GM12878 (cell line): ENCODE measurements at regions of chr2 and their contacts with region 1.

Region 1: GRCh38 chr2:198715302-198715835 is 742.4 kb downstream of the SATB2 start:
- DNase-seq: no peak
- ATAC-seq: peak; percentile 25
- H3K4me3 ChIP-seq: no peak overlapping the region
- H3K27ac ChIP-seq: no peak overlapping the region
- H3K4me1 ChIP-seq: no peaks in the 10 kb centered on the region
- H3K27me3 ChIP-seq: no peaks in the 10 kb centered on the region
- CTCF ChIP-seq: no peak
- EP300 ChIP-seq: no peak
- POLR2A ChIP-seq: no peak
- RAD21 ChIP-seq: no peak

Region 2: DNA sequence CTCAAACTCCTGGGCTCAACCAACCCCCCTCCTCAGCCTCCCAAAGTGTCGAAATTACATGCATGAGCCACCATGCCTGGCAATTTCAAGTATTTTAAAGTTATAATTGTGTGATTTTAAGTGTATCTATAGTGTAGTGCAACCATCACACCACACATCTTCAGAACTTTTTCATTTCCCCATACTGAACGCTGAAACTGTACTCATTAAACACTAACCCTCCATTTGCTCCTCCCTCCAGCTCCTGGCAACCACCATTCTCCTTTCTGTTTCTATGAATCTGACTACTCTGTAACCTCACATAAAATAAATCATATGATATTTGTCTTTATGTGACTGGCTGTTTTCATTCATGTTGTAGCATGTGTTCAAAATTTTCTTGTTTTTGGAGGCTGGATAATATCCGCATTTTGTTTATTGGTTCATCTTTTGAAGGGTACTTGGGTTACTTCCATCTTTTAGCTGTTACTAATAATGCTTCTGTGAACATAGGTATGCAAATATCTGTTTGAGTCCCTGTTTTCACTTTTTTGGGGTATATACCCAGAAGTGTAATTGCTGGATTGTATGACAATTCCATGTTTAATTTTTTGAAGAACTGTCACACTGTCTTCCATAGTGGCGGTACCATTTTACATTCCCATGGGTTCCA is 722.8 kb before region 1 on chr2:
- CTCF ChIA-PET with region 1: no interaction called
- POLR2A ChIA-PET with region 1: no interaction called
- RAD21 ChIA-PET with region 1: no interaction called
- SMC1A ChIA-PET with region 1: no interaction called
- in situ Hi-C with region 1: no loop called
- intact Hi-C with region 1: no loop called
- DNase-seq: no peak
- ATAC-seq: peak; percentile 98
- H3K4me3 ChIP-seq: no peak overlapping the region
- H3K27ac ChIP-seq: peak overlapping the region; percentile 43; the same call in 1 of the 2 replicates
- H3K4me1 ChIP-seq: peaks cover 16% of the 10 kb centered on the region
- H3K27me3 ChIP-seq: no peaks in the 10 kb centered on the region
- CTCF ChIP-seq: no peak
- EP300 ChIP-seq: 0 out of 4 replicates have a peak, but pooled peaks of 1 of the 2 experiments have one; percentile 9
- POLR2A ChIP-seq: no peak
- RAD21 ChIP-seq: no peak

Region 3: DNA sequence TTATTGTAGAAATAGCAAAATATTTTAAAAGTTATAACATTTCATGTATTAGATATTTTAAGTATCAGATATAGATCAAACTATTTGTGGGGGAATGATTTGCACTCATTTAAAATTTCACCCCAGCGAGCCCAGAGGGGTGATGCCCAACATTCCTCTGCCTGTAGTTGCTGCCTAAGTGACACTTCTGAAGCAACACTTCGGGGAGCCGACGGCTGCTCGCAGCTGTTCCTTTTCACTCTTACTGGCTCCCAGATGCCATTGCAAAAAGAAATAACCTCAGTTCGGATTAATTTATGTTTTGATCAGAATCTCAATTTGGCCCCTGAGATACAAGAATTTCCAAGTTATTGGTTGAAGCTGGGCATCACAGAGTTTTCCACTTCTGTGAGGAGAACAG is 307.2 kb before region 1 on chr2:
- CTCF ChIA-PET with region 1: no interaction called
- POLR2A ChIA-PET with region 1: no interaction called
- RAD21 ChIA-PET with region 1: no interaction called
- SMC1A ChIA-PET with region 1: no interaction called
- in situ Hi-C with region 1: no loop called
- intact Hi-C with region 1: no loop called
- DNase-seq: no peak
- ATAC-seq: no peak
- H3K4me3 ChIP-seq: no peak overlapping the region
- H3K27ac ChIP-seq: no peak overlapping the region
- H3K4me1 ChIP-seq: no peaks in the 10 kb centered on the region
- H3K27me3 ChIP-seq: no peaks in the 10 kb centered on the region; a peak in 1 of 4 replicates
- CTCF ChIP-seq: no peak
- EP300 ChIP-seq: no peak
- POLR2A ChIP-seq: no peak
- RAD21 ChIP-seq: no peak

Region 4: DNA sequence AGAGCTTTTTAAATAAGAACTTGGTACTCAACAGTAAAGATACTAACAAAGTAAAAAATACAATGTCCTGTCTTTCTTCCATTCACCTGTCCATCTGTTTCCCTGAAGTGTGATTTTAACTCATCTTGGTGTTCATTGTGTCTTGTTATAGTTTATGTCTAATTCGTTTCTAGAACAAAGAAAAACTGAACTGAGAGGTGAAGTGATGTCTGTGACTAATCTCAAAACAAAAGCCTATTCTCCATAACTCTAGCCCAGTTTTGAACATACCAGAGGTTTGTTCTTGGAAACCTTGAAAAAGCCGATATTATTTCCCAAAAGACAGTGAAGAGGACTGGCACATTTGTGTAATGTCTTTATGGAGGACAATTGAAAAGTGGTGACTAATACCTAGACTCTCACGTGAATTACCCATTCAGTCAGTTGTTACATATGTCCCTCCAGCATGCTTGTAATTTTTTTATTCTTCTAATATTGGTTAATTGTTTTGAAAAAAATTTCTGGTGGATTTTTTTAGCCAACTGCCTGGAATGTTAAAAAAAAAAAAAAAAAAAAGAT is 16.6 kb after region 1 on chr2:
- CTCF ChIA-PET with region 1: interaction called, 6 read pairs
- POLR2A ChIA-PET with region 1: interaction called, 10 read pairs
- RAD21 ChIA-PET with region 1: interaction called, 3 read pairs
- SMC1A ChIA-PET with region 1: interaction called, 8 read pairs
- in situ Hi-C with region 1: no loop called
- intact Hi-C with region 1: no loop called
- DNase-seq: no peak
- ATAC-seq: peak; percentile 80
- H3K4me3 ChIP-seq: no peak overlapping the region
- H3K27ac ChIP-seq: no peak overlapping the region
- H3K4me1 ChIP-seq: no peaks in the 10 kb centered on the region
- H3K27me3 ChIP-seq: no peaks in the 10 kb centered on the region
- CTCF ChIP-seq: no peak
- EP300 ChIP-seq: no peak
- POLR2A ChIP-seq: no peak
- RAD21 ChIP-seq: no peak

Region 5: GRCh38 chr2:198762441-198762840 is 47.1 kb after region 1 on chr2:
- CTCF ChIA-PET with region 1: interaction called, 3 read pairs
- POLR2A ChIA-PET with region 1: no interaction called
- RAD21 ChIA-PET with region 1: interaction called, 4 read pairs
- SMC1A ChIA-PET with region 1: interaction called, 30 read pairs
- in situ Hi-C with region 1: no loop called
- intact Hi-C with region 1: no loop called
- DNase-seq: no peak
- ATAC-seq: peak; percentile 45
- H3K4me3 ChIP-seq: no peak overlapping the region
- H3K27ac ChIP-seq: no peak overlapping the region
- H3K4me1 ChIP-seq: no peaks in the 10 kb centered on the region
- H3K27me3 ChIP-seq: no peaks in the 10 kb centered on the region
- CTCF ChIP-seq: no peak
- EP300 ChIP-seq: no peak
- POLR2A ChIP-seq: no peak
- RAD21 ChIP-seq: no peak